Mammary epithelial cell (primary cell): ENCODE measurements at regions of chr10 and their contacts with region 1.

Region 1: GRCh38 chr10:45282061-45282460 is 33.3 kb downstream of the OR13A1 start:
- DNase-seq: no peak
- H3K4me3 ChIP-seq: no peak overlapping the region
- H3K27ac ChIP-seq: no peak overlapping the region
- H3K4me1 ChIP-seq: no peaks in the 10 kb centered on the region
- H3K27me3 ChIP-seq: peaks cover 2% of the 10 kb centered on the region
- CTCF ChIP-seq: peak in 1 of 2 donors; percentile 8

Region 2: DNA sequence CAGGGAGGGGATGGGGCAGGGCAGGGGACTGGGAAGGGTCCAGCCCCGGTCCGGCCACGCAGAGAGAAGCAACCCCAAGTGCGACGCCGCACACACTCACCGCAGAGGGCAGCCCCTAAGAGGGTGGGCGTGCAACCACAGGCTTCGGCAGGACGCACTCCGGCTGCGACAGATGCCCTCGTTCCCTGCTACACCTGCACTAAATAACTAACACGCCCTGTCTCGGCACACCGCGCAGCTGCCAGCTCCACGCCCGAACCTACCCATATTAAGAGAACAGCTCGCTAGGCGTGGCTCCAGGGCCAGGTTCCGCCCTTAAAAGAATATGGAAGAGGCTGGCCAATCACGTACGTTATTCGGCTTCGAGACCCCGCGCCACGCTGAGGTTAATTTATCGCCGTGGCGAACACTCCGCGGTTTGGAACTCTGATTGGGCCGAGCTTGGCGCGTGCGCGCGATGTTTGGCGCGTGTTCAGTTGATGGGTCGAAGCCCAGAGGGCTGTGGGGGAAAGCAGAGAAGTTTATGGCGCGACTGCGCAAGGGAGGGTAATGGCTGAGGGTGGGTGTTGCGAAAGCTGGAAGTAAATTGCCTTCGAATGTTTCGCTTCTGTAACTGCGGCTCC is 57.7 kb before region 1 on chr10:
- CTCF ChIA-PET with region 1: no interaction called
- dilution Hi-C with region 1: no loop called
- in situ Hi-C with region 1: no loop called
- intact Hi-C with region 1: no loop called
- DNase-seq: no peak
- H3K4me3 ChIP-seq: no peak overlapping the region
- H3K27ac ChIP-seq: no peak overlapping the region
- H3K4me1 ChIP-seq: no peaks in the 10 kb centered on the region
- H3K27me3 ChIP-seq: peaks cover 2% of the 10 kb centered on the region
- CTCF ChIP-seq: no peak

Region 3: GRCh38 chr10:45249978-45250693 is 31.9 kb before region 1 on chr10:
- CTCF ChIA-PET with region 1: no interaction called
- dilution Hi-C with region 1: loop called (anchors 5 kb)
- in situ Hi-C with region 1: no loop called
- intact Hi-C with region 1: no loop called
- DNase-seq: peak; percentile 58
- H3K4me3 ChIP-seq: no peak overlapping the region
- H3K27ac ChIP-seq: no peak overlapping the region
- H3K4me1 ChIP-seq: no peaks in the 10 kb centered on the region
- H3K27me3 ChIP-seq: no peaks in the 10 kb centered on the region
- CTCF ChIP-seq: peak; percentile 27 to 49

Region 4: DNA sequence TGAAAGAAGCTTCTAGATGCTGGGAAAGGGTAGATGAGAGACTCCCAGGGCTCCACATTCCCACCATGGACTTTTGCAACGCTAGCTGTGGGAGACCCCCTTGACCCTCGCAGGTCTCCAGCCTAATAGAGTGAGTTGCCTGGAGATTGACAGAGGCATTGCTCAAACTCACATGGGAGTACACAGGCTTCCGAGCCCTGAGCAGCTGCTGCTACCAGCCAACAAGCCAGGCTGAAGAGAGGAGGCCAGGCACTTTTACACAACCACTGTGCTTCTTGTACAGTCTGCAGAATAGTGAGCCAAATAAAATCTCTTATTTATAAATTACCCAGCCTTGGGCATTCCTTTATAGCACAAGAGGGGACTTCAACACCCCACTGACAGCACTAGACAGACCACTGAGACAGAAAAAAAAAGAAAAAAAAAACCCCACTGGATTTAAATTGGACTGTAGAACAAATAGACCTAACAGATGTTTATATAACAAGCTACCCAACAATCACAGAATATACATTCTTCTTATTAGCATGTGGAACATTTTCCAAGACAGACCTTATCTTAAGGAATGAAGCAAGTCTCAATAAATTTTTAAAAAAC is 244.3 kb after region 1 on chr10:
- CTCF ChIA-PET with region 1: no interaction called
- dilution Hi-C with region 1: no loop called
- in situ Hi-C with region 1: no loop called
- intact Hi-C with region 1: no loop called
- DNase-seq: no peak
- H3K4me3 ChIP-seq: no peak overlapping the region
- H3K27ac ChIP-seq: no peak overlapping the region
- H3K4me1 ChIP-seq: no peaks in the 10 kb centered on the region
- H3K27me3 ChIP-seq: no peaks in the 10 kb centered on the region
- CTCF ChIP-seq: no peak

Region 5: DNA sequence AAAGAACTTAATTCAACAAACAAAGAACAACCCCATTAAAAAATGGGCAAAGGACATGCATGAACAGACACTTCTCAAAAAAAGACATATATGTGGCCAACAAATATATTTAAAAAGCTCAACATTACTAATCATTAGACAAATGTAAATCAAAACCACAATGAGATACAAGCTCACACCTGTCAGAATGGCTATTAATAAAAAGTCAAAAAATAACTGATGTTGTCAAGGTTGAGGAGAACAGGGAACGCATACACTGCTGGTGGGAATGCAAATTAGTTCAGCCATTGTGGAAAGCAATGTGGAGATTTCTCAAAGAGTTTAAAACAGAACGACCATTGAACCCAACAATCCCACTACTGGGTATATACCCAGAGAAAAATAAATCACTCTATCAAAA is 371.4 kb after region 1 on chr10:
- CTCF ChIA-PET with region 1: no interaction called
- dilution Hi-C with region 1: no loop called
- in situ Hi-C with region 1: no loop called
- intact Hi-C with region 1: no loop called
- DNase-seq: no peak
- H3K4me3 ChIP-seq: no peak overlapping the region
- H3K27ac ChIP-seq: no peak overlapping the region
- H3K4me1 ChIP-seq: no peaks in the 10 kb centered on the region
- H3K27me3 ChIP-seq: no peaks in the 10 kb centered on the region
- CTCF ChIP-seq: no peak